ENCODE measurements at regions of chr3 and their contacts with region 1.

Region 1: GRCh38 chr3:5194341-5195159 is 7.0 kb downstream of the EDEM1 start:
- DNase-seq: peak; percentile 66
- H3K4me3 Mint-ChIP-seq: peak overlapping the region; percentile 25
- H3K27ac Mint-ChIP-seq: peak overlapping the region; percentile 98
- H3K4me1 Mint-ChIP-seq: peaks cover 84% of the 10 kb centered on the region
- H3K27me3 Mint-ChIP-seq: no peaks in the 10 kb centered on the region

Region 2: DNA sequence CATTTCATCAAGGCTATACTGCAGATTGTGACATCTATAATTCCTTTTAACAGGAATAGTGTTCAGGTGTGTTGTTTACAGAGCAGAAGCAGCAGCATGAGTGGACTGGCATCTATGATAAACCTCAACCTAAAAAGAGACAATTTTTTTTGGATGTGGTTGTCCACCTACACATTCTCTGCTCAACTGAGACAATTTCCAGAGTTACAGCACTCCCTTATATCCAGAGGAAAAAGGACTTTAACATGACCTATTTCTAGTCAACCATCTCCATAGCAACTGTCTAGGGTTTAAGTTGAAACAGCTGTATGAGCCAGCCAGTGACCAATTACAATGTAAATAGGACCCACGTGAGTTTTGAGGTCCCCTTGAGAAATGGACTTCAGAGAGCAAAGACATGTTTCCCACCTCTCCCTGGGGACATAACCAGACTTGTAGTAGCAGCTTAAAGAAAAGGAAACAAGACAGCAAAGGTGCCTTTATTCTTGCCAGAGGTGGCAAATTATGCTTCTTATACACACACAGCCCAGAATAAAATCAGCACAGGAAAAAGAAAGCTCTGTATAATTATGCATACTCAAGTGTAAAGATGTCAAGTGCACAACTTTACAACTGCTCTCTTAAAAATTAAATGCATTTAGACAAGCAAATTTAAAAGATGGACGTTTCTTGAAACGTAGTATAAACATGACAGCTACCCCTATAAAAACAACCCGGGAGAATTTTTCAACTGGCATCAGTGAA is 767.8 kb before region 1 on chr3:
- CTCF ChIA-PET with region 1: no interaction called
- intact Hi-C with region 1: loop called (anchors 10 kb)
- DNase-seq: no peak
- H3K4me3 Mint-ChIP-seq: no peak overlapping the region
- H3K27ac Mint-ChIP-seq: no peak overlapping the region
- H3K4me1 Mint-ChIP-seq: peaks cover 21% of the 10 kb centered on the region
- H3K27me3 Mint-ChIP-seq: no peaks in the 10 kb centered on the region

Region 3: DNA sequence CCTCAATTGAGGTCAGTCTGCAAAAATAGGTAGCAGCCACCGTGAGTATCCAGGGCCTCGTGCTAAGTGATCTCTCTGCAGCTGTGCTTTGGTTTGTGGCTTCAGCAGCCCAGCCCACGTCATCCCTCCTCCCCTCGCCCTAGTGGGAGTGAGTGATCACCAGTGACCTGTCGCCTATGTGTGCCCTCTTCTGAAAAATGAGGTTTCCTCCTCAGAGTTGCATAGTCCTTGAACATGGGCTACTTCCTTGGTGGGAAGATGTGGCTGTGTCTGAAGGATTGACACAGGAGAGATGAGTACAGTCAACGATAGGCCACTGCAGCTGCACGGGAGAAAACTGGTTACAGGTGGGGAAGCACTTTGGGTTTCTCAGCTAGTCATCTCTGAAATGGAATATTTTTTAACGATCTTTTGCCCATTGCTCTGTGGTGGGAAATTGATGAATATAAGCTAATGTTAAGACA is 360.1 kb before region 1 on chr3:
- CTCF ChIA-PET with region 1: interaction called, 3 read pairs
- intact Hi-C with region 1: loop called (anchors 2 kb)
- DNase-seq: peak; percentile 84
- H3K4me3 Mint-ChIP-seq: peak overlapping the region; percentile 13
- H3K27ac Mint-ChIP-seq: peak overlapping the region; percentile 93
- H3K4me1 Mint-ChIP-seq: peaks cover 85% of the 10 kb centered on the region
- H3K27me3 Mint-ChIP-seq: no peaks in the 10 kb centered on the region

Region 4: GRCh38 chr3:5160928-5161858 is 33.4 kb before region 1 on chr3:
- CTCF ChIA-PET with region 1: no interaction called
- intact Hi-C with region 1: loop called (anchors 1 kb)
- DNase-seq: peak; percentile 26
- H3K4me3 Mint-ChIP-seq: no peak overlapping the region
- H3K27ac Mint-ChIP-seq: peak overlapping the region; percentile 54
- H3K4me1 Mint-ChIP-seq: peaks cover 72% of the 10 kb centered on the region
- H3K27me3 Mint-ChIP-seq: no peaks in the 10 kb centered on the region

Region 5: DNA sequence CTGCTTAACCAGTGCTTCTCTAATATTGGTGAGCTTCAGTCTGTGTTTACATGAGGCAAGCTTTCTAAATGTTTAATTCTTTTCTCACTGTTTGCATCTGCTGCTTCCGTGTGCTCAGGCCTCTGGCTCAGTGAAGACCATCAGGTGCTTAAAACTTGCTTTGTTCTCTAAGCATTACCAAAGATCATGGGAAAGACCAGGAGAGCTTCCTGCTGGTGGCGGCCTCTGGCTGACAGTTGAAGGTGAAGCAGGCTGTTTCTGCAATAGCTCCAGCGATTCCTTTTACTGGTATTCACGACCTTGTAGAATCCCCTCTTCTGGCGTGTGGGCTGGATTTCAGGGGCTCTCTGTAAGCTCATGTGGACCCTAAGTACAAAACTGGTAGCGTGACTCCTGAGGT is 38.0 kb after region 1 on chr3:
- CTCF ChIA-PET with region 1: no interaction called
- intact Hi-C with region 1: no loop called
- DNase-seq: peak; percentile 14
- H3K4me3 Mint-ChIP-seq: no peak overlapping the region
- H3K27ac Mint-ChIP-seq: no peak overlapping the region
- H3K4me1 Mint-ChIP-seq: no peaks in the 10 kb centered on the region
- H3K27me3 Mint-ChIP-seq: peaks cover 3% of the 10 kb centered on the region

Region 6: DNA sequence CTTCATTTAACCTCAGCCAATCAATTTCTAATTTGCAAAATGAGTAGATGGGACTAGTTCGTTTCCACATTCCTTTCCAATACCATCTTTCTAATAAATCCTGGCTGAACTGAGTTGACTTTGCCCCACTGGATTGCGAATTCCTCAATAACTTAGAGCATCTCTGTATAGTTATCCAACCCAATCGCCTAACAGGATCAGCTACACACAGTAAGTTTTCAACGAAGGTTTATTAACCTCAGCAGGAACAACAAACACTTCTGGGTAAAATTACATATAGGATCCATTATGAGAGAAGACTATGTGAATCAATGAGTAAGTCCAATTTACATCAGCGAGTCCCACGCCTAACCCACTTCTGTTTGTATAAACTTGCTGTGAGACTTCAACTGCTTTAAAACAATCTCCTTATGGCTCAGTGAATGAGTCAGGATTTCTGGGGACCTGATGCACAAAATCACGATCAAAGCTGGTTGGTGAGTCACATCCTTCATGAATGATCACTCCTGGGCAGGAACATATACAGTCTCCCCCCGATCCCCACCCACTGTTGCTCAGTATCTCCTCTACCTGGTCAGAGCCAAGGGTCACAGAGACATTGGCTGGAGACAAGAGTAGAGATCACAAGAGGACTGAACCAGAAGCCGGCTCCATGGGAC is 135.7 kb after region 1 on chr3:
- CTCF ChIA-PET with region 1: no interaction called
- intact Hi-C with region 1: loop called (anchors 1 kb)
- DNase-seq: peak; percentile 63
- H3K4me3 Mint-ChIP-seq: no peak overlapping the region
- H3K27ac Mint-ChIP-seq: peak overlapping the region; percentile 15
- H3K4me1 Mint-ChIP-seq: peaks cover 23% of the 10 kb centered on the region
- H3K27me3 Mint-ChIP-seq: peaks cover 3% of the 10 kb centered on the region

Region 7: DNA sequence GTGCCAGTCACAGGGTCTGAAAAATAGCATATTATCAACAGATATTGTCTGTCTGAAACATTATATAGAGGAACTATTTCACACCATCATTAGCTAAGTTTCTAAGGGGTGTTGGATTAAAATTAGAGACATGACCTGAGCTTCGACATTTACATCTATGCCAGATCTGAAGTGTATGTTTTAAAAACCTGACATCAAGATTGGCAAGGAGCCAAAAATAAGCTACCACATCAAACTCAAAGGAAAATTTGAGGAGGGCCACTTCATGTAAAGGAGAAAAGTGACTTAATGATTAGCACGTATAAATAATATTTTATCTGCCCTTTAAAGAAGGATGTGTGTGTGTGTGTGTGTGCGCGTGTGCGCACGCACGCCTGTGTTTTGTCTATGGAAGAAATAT is 914.4 kb after region 1 on chr3:
- CTCF ChIA-PET with region 1: no interaction called
- intact Hi-C with region 1: no loop called
- DNase-seq: no peak
- H3K4me3 Mint-ChIP-seq: no peak overlapping the region
- H3K27ac Mint-ChIP-seq: no peak overlapping the region
- H3K4me1 Mint-ChIP-seq: no peaks in the 10 kb centered on the region
- H3K27me3 Mint-ChIP-seq: no peaks in the 10 kb centered on the region